Ovary (tissue), 10 donors: ENCODE measurements at regions of chr1 and their contacts with region 1.

Region 1: GRCh38 chr1:112515311-112516009 is 6.7 kb downstream of the WNT2B start:
- DNase-seq: no peak
- H3K4me3 ChIP-seq: no peak overlapping the region
- H3K27ac ChIP-seq: no peak overlapping the region
- H3K4me1 ChIP-seq: no peaks in the 10 kb centered on the region
- H3K27me3 ChIP-seq: no peaks in the 10 kb centered on the region
- CTCF ChIP-seq: no peak
- EP300 ChIP-seq: no peak
- POLR2A ChIP-seq: no peak

Region 2: GRCh38 chr1:112477550-112477949 is 37.9 kb before region 1 on chr1:
- intact Hi-C with region 1: loop called in 1 of 4 experiments (anchors 5 kb)
- DNase-seq: no peak
- H3K4me3 ChIP-seq: no peak overlapping the region
- H3K27ac ChIP-seq: no peak overlapping the region
- H3K4me1 ChIP-seq: no peaks in the 10 kb centered on the region
- H3K27me3 ChIP-seq: no peaks in the 10 kb centered on the region
- CTCF ChIP-seq: no peak
- EP300 ChIP-seq: no peak
- POLR2A ChIP-seq: no peak